Common myeloid progenitor, CD34-positive (primary cell): ENCODE measurements at regions of chr3 and their contacts with region 1.

Region 1: GRCh38 chr3:14203521-14204079 is 25.0 kb downstream of the LSM3 start:
- DNase-seq: peak; percentile 83 to 93 (median 88)
- H3K4me3 ChIP-seq: no peak overlapping the region
- H3K27ac ChIP-seq: no peak overlapping the region
- H3K4me1 ChIP-seq: peaks cover 2 to 21% (median 18%) of the 10 kb centered on the region in 4 experiments
- H3K27me3 ChIP-seq: no peaks in the 10 kb centered on the region

Region 2: DNA sequence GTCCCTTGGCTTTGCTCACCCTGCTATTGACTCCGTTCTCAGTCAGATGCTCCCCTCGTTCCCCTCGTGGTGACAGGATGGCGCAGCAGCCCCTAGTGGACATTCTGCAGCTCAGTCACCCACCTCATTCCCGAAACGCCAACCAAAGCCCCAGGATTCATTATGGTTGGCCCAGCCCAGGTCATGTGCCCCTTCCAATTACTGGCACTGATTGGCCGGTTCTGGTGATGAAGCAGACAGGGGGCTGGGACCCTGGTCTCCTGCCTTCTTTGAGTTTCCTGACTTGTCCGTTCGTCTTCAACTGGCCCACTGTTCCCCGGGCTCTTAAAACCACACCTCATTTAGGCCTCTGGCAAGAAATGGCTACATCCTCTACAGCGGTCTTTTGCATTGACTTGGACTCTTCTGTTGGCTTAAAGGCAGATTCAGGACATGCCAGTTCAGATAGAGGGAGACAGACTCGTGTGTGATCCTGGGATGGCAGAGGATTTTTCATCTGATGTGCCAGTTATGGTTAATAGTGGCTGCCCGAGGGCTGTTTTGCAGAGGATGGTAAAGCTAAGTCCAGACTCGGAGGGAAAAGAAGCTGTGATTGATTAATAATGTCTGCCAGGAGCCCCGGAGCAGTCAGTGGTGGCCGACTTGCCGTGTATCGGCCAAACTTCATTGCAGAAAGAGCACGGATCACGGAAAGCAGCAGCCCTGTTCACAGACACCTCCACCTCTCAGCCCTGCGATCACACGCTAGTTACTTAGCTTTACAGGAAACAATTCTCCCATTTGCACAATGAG is 12.9 kb after region 1 on chr3:
- CTCF ChIA-PET with region 1: interaction called, 65 read pairs
- POLR2A ChIA-PET with region 1: no interaction called
- DNase-seq: peak in 1 of 3 donors; percentile 78
- H3K4me3 ChIP-seq: peak overlapping the region in 1 of 7 experiments; percentile 36
- H3K27ac ChIP-seq: no peak overlapping the region
- H3K4me1 ChIP-seq: no peaks in the 10 kb centered on the region
- H3K27me3 ChIP-seq: no peaks in the 10 kb centered on the region

Region 3: DNA sequence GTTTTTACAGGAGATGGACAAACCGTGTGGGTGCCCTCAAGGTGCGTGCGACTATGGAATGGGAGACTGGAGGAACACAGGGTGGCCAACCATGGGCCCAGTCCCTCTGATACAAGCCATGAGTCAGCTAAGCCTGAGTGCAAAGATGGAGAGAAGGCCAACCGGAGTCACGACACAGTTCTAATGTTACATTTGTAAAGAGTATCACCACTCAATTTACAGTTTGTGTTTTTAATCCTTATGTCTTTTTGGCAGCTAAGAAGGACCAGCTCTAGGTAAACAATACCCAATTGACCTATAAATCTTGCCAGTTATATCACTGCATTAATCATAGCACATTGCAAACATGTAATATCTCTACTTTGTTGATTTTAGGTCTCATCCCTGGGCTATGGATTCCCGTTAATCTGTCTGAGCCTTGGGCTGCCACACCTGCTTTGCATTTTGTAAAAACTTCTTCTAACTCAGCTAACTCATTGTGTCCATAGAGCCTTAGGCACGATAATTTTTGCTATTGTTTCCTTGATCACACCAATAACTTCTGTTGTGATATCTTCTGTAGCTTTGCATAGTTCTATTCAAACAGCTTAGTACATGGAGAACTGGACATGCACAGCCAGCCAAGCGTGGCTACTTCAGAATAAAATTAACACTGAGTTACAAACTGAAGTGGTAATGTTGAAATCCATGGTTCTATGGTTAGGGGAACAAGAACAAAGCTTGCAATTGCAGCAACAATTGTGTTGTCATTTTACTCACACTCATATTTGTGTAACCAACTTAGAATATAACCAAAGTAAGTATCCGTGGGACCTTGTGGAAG is 25.3 kb after region 1 on chr3:
- CTCF ChIA-PET with region 1: interaction called, 65 read pairs
- POLR2A ChIA-PET with region 1: interaction called, 5 read pairs
- DNase-seq: no peak
- H3K4me3 ChIP-seq: no peak overlapping the region
- H3K27ac ChIP-seq: no peak overlapping the region
- H3K4me1 ChIP-seq: peaks cover 15 to 37% (median 27%) of the 10 kb centered on the region in 4 experiments
- H3K27me3 ChIP-seq: no peaks in the 10 kb centered on the region

Region 4: DNA sequence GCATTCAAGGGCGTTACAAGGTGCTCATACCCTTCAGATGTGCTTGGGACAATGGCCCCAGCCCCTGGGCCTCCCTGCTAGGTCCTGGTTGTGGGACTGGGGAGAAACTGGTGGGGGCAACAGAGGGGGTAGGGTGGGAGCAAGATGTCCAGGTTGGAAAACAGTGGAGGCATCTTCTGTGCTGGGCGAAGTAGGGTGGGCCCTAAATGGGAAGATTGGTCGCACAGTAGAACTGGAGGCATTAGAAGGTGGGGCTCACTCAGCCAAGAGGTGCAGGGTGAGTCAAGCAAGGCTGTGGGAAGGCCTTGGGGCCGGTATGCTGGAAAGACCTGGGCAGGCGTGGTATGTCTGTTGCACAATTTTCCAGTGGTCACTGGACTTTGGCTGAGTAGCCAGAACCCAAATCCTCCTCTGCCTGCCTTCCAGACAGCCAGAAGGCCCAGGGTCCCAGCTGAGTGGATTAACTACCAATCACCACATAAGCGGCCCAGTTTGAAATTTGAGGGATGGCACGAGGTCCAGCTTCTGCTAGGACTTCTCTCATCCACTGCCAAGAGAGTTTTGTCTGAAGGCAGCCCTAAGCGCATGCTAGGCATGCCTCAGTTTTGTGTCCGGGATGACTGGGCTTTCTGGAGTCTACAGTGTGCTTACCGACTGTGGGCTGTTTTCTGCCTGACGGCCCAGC is 49.6 kb after region 1 on chr3:
- CTCF ChIA-PET with region 1: interaction called, 84 read pairs
- POLR2A ChIA-PET with region 1: no interaction called
- DNase-seq: no peak
- H3K4me3 ChIP-seq: no peak overlapping the region
- H3K27ac ChIP-seq: no peak overlapping the region
- H3K4me1 ChIP-seq: peaks cover 0 to 9% (median 4%) of the 10 kb centered on the region in 4 experiments
- H3K27me3 ChIP-seq: no peaks in the 10 kb centered on the region

Region 5: DNA sequence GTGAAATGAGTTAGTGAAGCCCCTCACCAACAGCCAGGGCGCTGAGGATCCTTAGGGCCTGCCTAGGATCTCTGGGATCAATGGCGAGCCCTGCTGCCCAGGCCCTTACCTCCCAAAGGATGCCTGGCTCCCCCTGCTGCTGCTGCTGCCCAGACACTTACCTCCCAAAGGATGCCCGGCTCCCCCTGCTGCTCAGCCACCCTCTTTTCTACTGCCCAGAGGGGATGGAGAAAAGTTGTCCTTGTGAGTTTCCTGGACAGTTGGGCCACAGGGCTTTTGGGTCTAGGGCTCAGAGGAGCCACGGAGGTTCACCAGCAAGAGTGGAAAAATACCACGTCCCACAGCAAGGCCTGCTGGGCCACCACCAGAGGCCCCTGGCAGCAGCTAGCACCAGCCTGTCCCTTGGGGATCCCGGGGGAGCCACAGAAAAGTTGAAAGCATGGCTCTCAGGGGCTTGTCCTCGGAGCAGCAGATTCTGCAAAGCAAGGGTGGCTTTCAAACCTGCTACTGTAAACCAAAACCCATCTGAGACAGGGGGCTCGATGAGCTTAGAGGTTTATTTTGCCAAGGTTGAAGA is 258.2 kb after region 1 on chr3:
- CTCF ChIA-PET with region 1: interaction called, 51 read pairs
- POLR2A ChIA-PET with region 1: no interaction called
- DNase-seq: peak; percentile 62 to 63 (median 63)
- H3K4me3 ChIP-seq: no peak overlapping the region
- H3K27ac ChIP-seq: no peak overlapping the region
- H3K4me1 ChIP-seq: no peaks in the 10 kb centered on the region
- H3K27me3 ChIP-seq: no peaks in the 10 kb centered on the region

Region 6: DNA sequence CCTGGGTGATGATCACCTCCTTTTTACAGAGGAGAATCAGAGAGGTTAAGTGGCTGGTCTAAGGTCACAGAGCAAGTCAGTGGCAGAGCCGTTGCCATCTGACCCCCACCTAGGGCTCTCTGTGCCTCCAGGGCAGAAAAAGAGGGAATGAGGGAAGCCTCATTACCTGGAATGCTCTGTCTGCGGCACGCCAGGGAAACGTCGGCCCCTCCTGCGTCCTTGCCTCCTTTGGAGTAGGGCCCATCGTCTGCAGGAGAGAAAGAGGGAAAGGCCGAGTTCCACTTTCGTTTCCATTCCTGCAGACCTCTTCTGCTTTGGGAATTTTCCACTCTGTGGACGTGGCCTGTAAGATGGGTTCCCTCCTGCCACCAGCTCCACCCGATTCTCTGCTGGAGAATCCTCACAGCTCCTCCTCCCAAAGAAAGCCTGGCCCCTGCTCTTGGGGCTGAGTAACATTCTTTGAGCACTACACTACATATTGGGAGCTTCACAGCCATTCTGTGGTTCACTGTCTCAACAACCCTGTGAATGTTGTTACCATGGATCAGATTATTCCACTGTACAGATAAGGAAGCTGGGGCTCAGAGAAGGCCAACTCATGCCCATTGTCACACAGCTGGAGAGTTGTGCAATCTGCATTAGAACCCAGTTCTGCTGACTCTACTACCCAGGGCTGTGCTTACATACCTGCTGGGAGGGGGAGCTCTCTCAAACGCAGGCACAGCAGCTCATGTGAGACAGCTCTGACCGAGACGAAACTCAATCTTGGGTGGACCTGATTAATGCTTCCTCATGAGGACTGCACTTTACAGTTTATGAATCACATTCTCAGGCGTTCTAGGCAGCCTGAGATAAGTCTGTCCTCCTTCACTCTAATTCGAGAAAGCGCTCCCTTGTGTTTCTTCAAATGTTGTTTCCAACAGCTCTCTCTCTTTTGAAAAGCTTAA is 322.4 kb after region 1 on chr3:
- CTCF ChIA-PET with region 1: no interaction called
- POLR2A ChIA-PET with region 1: no interaction called
- DNase-seq: no peak
- H3K4me3 ChIP-seq: no peak overlapping the region
- H3K27ac ChIP-seq: no peak overlapping the region
- H3K4me1 ChIP-seq: no peaks in the 10 kb centered on the region
- H3K27me3 ChIP-seq: peaks cover 0 to 8% (median 4%) of the 10 kb centered on the region in 5 experiments

Region 7: DNA sequence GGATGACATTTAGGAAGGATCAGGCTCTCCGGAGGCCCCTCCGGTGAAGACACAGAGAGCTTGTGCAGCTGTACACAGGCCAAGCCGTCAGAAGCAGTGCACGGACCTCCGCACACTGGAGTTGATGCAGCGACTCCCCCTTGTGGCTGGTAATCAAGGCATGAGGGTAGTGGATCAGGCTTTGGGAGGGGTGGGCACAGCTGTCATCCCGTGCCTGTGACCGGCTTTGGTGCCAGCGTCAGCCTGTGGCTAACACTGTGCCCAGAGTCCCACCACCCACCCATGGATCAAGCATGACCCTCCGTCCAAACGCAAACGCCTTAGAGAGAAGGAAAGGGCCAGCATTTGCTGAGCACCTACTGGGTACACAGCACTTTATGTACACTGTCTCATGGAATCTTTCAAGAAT is 344.7 kb after region 1 on chr3:
- CTCF ChIA-PET with region 1: interaction called, 10 read pairs
- POLR2A ChIA-PET with region 1: no interaction called
- DNase-seq: peak; percentile 61 to 75 (median 71)
- H3K4me3 ChIP-seq: no peak overlapping the region
- H3K27ac ChIP-seq: no peak overlapping the region
- H3K4me1 ChIP-seq: peaks cover 0 to under 1% (median 0%) of the 10 kb centered on the region in 4 experiments
- H3K27me3 ChIP-seq: peaks cover 3 to 65% (median 16%) of the 10 kb centered on the region in 5 experiments